CD14-positive monocyte (primary cell): ENCODE measurements at regions of chr19 and their contacts with region 1.

Region 1: DNA sequence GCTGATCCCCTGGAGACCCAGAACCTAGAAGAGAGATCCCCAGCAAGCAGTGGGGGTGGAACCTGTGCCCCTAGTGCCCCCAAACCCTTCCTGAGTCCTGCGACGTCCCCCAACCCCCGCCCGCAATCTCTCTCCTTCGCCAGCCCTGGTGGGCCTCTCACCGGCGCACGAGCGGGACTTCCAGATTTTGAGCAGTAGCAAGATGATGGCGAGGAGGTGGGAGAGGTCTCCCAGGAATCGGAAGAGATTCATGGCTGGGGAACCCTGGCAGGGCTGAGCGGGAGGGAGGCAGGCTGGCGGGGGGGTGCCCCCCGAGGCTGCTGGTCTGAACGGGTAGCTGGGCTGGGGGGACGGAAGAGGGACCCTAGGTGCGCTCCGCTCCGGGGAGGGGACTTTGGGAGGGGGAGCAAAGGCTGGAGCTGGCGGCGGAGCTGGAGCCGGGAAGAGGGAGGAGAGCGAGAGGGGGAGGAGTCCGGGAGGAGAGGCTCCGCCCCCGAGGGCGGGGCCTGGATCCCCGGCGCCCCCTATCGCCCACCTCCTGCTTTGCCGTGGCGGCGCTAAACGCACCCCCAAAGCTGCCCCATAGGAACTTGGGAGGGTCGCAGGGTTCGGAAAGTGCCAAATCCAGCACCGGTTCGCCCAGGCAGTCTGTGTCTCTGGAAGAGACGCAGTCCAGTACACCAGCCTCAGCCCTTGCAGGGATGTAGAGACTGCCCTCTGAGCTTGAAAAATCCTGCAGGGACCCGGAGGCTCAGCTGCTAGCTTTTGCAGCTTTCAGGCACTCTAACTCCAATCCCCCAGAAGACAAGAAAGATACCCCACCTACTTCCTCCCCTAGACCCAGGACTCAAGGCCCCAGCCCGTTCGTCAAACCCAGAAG is at the start of gene KDELR1:
- DNase-seq: peak; percentile 58 to 76 (median 68)
- H3K4me3 ChIP-seq: peak within 1 kb of the TSS; percentile 77 to 97 (median 92)
- H3K4me3 Mint-ChIP-seq: peak within 1 kb of the TSS; percentile 93 to 97
- H3K27ac ChIP-seq: peak within 1 kb of the TSS; percentile 74 to 89
- H3K27ac Mint-ChIP-seq: peak within 1 kb of the TSS; percentile 86 to 98 (median 93)
- H3K4me1 ChIP-seq: peaks cover 17% of the 10 kb centered on the region in 2 donors
- H3K4me1 Mint-ChIP-seq: peaks cover 12% of the 10 kb centered on the region
- H3K27me3 ChIP-seq: peaks cover 34 to 42% of the 10 kb centered on the region in 2 donors
- H3K27me3 Mint-ChIP-seq: peaks cover 44 to 49% (median 47%) of the 10 kb centered on the region in 3 donors
- CTCF ChIP-seq: peak; percentile 82
- polyA plus RNA-seq, gene KDELR1: 42.0 to 72.0 (median 51.3) TPM

Region 2: GRCh38 chr19:48445606-48446481 is 54.5 kb after region 1 on chr19 and contains the start of gene GRWD1:
- intact Hi-C with region 1: loop called in 1 of 2 experiments (anchors 10 kb)
- DNase-seq: peak; percentile 92 to 96 (median 94)
- H3K4me3 ChIP-seq: peak within 1 kb of the TSS; percentile 77 to 99 (median 95)
- H3K4me3 Mint-ChIP-seq: peak within 1 kb of the TSS; percentile 86 to 92
- H3K27ac ChIP-seq: peak within 1 kb of the TSS; percentile 82 to 91
- H3K27ac Mint-ChIP-seq: peak within 1 kb of the TSS; percentile 95 to 99 (median 98)
- H3K4me1 ChIP-seq: peaks cover 25 to 32% of the 10 kb centered on the region in 2 donors
- H3K4me1 Mint-ChIP-seq: peaks cover 23% of the 10 kb centered on the region
- H3K27me3 ChIP-seq: peaks cover 28 to 31% of the 10 kb centered on the region in 2 donors
- H3K27me3 Mint-ChIP-seq: peaks cover 25 to 36% (median 30%) of the 10 kb centered on the region in 3 donors
- CTCF ChIP-seq: peak; percentile 12
- polyA plus RNA-seq, gene GRWD1: 3.7 to 13.9 (median 10.0) TPM